Caco-2 (cell line): ENCODE measurements at regions of chr11 and their contacts with region 1.

Region 1: GRCh38 chr11:88103337-88104206 is 71.7 kb downstream of the RAB38 start:
- DNase-seq: peak; percentile 88 to 89
- H3K4me3 ChIP-seq: no peak overlapping the region
- H3K4me3 Mint-ChIP-seq: no peak overlapping the region
- H3K27ac Mint-ChIP-seq: no peak overlapping the region
- H3K4me1 ChIP-seq: no peaks in the 10 kb centered on the region
- H3K4me1 Mint-ChIP-seq: no peaks in the 10 kb centered on the region
- H3K27me3 ChIP-seq: no peaks in the 10 kb centered on the region
- H3K27me3 Mint-ChIP-seq: peaks cover 8% of the 10 kb centered on the region
- CTCF ChIP-seq: peak; percentile 92 to 98

Region 2: DNA sequence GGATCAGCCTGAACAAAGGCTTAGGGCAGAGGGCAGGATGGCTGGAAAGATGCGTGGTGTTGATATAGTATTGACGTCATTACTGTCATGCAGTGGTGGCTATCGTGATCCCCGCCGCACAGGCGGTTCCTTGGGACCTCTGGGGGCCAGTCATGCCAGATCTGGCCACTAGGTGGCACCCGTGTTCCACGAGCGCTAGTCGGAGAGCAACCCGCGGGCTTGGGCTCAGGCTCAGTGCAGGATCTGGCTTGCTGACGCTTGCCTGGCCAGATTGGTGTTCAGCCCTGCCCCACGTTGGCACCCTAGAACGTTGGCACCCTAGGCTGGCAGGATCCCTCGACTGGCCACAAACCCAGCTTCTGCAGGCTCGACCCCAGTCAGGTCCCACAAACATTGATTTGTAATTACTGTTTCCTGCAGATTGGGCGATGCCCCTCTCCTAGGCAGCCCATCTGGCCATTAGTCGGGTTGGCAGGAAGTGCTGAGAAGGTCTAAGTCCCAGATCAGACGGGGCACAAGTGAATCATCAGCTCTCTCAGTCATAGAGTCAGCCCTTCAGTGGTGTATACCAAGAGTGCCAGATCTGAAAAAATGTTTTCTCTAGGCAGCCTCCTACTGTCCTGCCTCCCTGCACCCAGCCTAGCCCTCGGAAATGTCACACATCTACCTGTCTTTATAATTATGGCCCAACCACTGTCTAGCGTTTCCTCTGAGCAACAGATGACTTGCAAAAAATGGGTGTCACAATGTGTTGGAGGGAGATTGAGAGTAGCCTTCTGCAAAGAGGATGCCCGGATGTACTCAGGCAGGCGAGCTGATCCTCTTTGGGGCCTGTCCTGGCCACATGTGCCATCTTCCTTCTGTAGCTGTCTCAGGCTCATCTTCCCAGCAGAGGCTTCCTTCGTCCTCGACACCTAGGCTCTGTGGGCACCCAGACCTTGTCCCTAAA is 750.5 kb before region 1 on chr11:
- CTCF ChIA-PET with region 1: no interaction called
- POLR2A ChIA-PET with region 1: no interaction called
- intact Hi-C with region 1: loop called (anchors 10 kb)
- DNase-seq: peak; percentile 87 to 96
- H3K4me3 ChIP-seq: no peak overlapping the region
- H3K4me3 Mint-ChIP-seq: no peak overlapping the region
- H3K27ac Mint-ChIP-seq: no peak overlapping the region
- H3K4me1 ChIP-seq: peaks cover 11% of the 10 kb centered on the region
- H3K4me1 Mint-ChIP-seq: peaks cover 2% of the 10 kb centered on the region
- H3K27me3 ChIP-seq: no peaks in the 10 kb centered on the region
- H3K27me3 Mint-ChIP-seq: no peaks in the 10 kb centered on the region
- CTCF ChIP-seq: peak; percentile 99 to 100

Region 3: DNA sequence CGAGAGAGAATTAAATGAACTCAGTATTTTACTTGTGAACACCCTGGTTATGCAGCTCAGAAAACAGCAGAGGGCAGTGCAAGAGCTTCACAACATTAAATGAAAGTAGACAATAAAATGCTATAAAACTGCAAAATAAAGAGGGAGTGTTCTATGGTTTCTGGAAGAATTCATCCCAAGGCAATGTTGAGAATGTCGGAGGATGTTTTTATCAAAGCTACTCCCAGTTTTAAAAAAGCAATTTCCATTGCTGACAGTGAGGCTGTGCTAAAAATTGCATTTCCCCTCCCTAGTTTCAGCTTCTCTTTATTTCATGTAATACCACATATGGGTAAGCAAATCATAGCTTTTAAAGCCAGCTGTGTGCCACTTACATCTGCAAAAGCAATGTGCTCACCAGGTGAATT is 225.2 kb before region 1 on chr11:
- CTCF ChIA-PET with region 1: no interaction called
- POLR2A ChIA-PET with region 1: no interaction called
- intact Hi-C with region 1: loop called (anchors 5 kb)
- DNase-seq: peak; percentile 32 to 45
- H3K4me3 ChIP-seq: no peak overlapping the region
- H3K4me3 Mint-ChIP-seq: no peak overlapping the region
- H3K27ac Mint-ChIP-seq: no peak overlapping the region
- H3K4me1 ChIP-seq: no peaks in the 10 kb centered on the region
- H3K4me1 Mint-ChIP-seq: no peaks in the 10 kb centered on the region
- H3K27me3 ChIP-seq: no peaks in the 10 kb centered on the region
- H3K27me3 Mint-ChIP-seq: no peaks in the 10 kb centered on the region
- CTCF ChIP-seq: peak; percentile 78 to 82

Region 4: GRCh38 chr11:88122956-88123355 is 19.4 kb after region 1 on chr11:
- CTCF ChIA-PET with region 1: no interaction called
- POLR2A ChIA-PET with region 1: no interaction called
- intact Hi-C with region 1: no loop called
- DNase-seq: no peak
- H3K4me3 ChIP-seq: no peak overlapping the region
- H3K4me3 Mint-ChIP-seq: no peak overlapping the region
- H3K27ac Mint-ChIP-seq: no peak overlapping the region
- H3K4me1 ChIP-seq: no peaks in the 10 kb centered on the region
- H3K4me1 Mint-ChIP-seq: no peaks in the 10 kb centered on the region
- H3K27me3 ChIP-seq: no peaks in the 10 kb centered on the region; the same call in 1 of the 2 replicates
- H3K27me3 Mint-ChIP-seq: peaks cover 7% of the 10 kb centered on the region
- CTCF ChIP-seq: no peak

Region 5: GRCh38 chr11:88146106-88146505 is 42.5 kb after region 1 on chr11:
- CTCF ChIA-PET with region 1: no interaction called
- POLR2A ChIA-PET with region 1: no interaction called
- intact Hi-C with region 1: no loop called
- DNase-seq: no peak
- H3K4me3 ChIP-seq: no peak overlapping the region
- H3K4me3 Mint-ChIP-seq: no peak overlapping the region
- H3K27ac Mint-ChIP-seq: no peak overlapping the region
- H3K4me1 ChIP-seq: no peaks in the 10 kb centered on the region
- H3K4me1 Mint-ChIP-seq: no peaks in the 10 kb centered on the region
- H3K27me3 ChIP-seq: no peaks in the 10 kb centered on the region
- H3K27me3 Mint-ChIP-seq: peaks cover 3% of the 10 kb centered on the region
- CTCF ChIP-seq: no peak

Region 6: DNA sequence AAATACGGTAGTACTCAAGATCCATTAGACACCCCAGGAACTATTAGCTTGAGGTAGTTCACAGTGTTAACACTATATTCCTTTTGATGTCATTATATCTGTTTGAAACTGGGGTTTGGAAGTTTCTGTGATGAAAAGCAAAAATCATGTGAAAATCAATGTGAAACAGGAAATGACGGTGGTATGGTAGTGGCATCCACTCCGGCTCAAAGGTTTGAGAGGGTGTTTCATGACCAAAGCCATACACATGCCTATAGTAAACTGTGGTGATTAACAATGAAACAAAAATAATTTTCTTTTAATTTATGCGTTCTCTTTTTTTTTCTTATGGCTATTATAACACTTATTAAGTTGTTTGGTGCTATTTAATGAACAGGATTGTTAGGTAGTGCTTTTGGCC is 60.7 kb after region 1 on chr11:
- CTCF ChIA-PET with region 1: no interaction called
- POLR2A ChIA-PET with region 1: no interaction called
- intact Hi-C with region 1: loop called (anchors 5 kb)
- DNase-seq: no peak
- H3K4me3 ChIP-seq: no peak overlapping the region
- H3K4me3 Mint-ChIP-seq: no peak overlapping the region
- H3K27ac Mint-ChIP-seq: no peak overlapping the region
- H3K4me1 ChIP-seq: no peaks in the 10 kb centered on the region
- H3K4me1 Mint-ChIP-seq: no peaks in the 10 kb centered on the region
- H3K27me3 ChIP-seq: peaks cover 1% of the 10 kb centered on the region; the same call in 1 of the 2 replicates
- H3K27me3 Mint-ChIP-seq: peaks cover 12% of the 10 kb centered on the region
- CTCF ChIP-seq: no peak

Region 7: DNA sequence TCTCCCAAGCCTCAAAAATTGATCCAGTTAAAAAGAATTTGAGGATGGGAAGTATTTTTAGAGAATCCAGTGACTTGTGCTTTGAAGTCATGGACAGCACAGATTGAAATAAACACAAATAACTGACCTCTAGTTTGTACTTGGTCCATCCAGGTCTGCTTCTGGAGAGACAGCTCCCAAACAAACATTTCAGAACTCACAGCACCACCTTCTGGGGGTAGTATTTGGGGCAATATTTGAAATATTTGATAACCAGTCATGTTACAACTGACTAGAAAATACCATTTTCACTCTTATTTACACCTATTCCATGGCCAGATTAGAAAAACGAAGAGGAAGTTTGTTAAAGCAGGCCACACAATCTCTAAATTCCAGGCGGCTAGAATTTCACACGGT is 177.7 kb after region 1 on chr11:
- CTCF ChIA-PET with region 1: interaction called, 3 read pairs
- POLR2A ChIA-PET with region 1: no interaction called
- intact Hi-C with region 1: loop called (anchors 1 kb)
- DNase-seq: peak in 1 of 2 experiments; percentile 25
- H3K4me3 ChIP-seq: no peak overlapping the region
- H3K4me3 Mint-ChIP-seq: no peak overlapping the region
- H3K27ac Mint-ChIP-seq: no peak overlapping the region
- H3K4me1 ChIP-seq: no peaks in the 10 kb centered on the region
- H3K4me1 Mint-ChIP-seq: no peaks in the 10 kb centered on the region
- H3K27me3 ChIP-seq: no peaks in the 10 kb centered on the region
- H3K27me3 Mint-ChIP-seq: no peaks in the 10 kb centered on the region
- CTCF ChIP-seq: peak; percentile 21 to 33

Region 8: GRCh38 chr11:88886796-88887195 is 783.2 kb after region 1 on chr11:
- CTCF ChIA-PET with region 1: no interaction called
- POLR2A ChIA-PET with region 1: no interaction called
- intact Hi-C with region 1: loop called (anchors 1 kb)
- DNase-seq: peak; percentile 57 to 72
- H3K4me3 ChIP-seq: no peak overlapping the region
- H3K4me3 Mint-ChIP-seq: no peak overlapping the region
- H3K27ac Mint-ChIP-seq: no peak overlapping the region
- H3K4me1 ChIP-seq: no peaks in the 10 kb centered on the region
- H3K4me1 Mint-ChIP-seq: no peaks in the 10 kb centered on the region
- H3K27me3 ChIP-seq: no peaks in the 10 kb centered on the region
- H3K27me3 Mint-ChIP-seq: peaks cover 2% of the 10 kb centered on the region
- CTCF ChIP-seq: peak; percentile 49 to 57